A549 (cell line): ENCODE measurements at regions of chr2 and their contacts with region 1.

Region 1: GRCh38 chr2:101252408-101253012 is at the start of gene CNOT11:
- DNase-seq: peak; percentile 77 to 98
- ATAC-seq: peak; percentile 94 to 98
- H3K4me3 ChIP-seq: peak within 1 kb of the TSS; percentile 78
- H3K27ac ChIP-seq: peak within 1 kb of the TSS; percentile 91 to 97
- H3K4me1 ChIP-seq: peaks cover 29% of the 10 kb centered on the region
- CTCF ChIP-seq: no peak
- EP300 ChIP-seq: no peak
- POLR2A ChIP-seq: peak; percentile 96
- RAD21 ChIP-seq: 0 out of 5 replicates have a peak, but pooled peaks of 1 of the 2 experiments have one; percentile 3
- polyA plus RNA-seq, gene CNOT11: 76.7 and 99.1 TPM in 2 replicates

Region 2: GRCh38 chr2:101160454-101160853 is 92.1 kb before region 1 on chr2:
- CTCF ChIA-PET with region 1: no interaction called
- POLR2A ChIA-PET with region 1: no interaction called
- DNase-seq: peak in 1 of 2 experiments; percentile 56
- ATAC-seq: peak; percentile 59 to 77; a peak in 4 of 6 replicates
- H3K4me3 ChIP-seq: no peak overlapping the region
- H3K27ac ChIP-seq: peak overlapping the region in 1 of 2 experiments; percentile 59; a peak in 3 of 6 replicates
- H3K4me1 ChIP-seq: peaks cover 15% of the 10 kb centered on the region
- CTCF ChIP-seq: no peak
- EP300 ChIP-seq: no peak
- POLR2A ChIP-seq: no peak
- RAD21 ChIP-seq: no peak

Region 3: GRCh38 chr2:101238930-101239759 is 13.4 kb before region 1 on chr2:
- CTCF ChIA-PET with region 1: interaction called, 30 read pairs
- POLR2A ChIA-PET with region 1: interaction called, 8 read pairs
- DNase-seq: peak; percentile 68 to 90
- ATAC-seq: peak; percentile 85 to 90
- H3K4me3 ChIP-seq: peak overlapping the region; percentile 27
- H3K27ac ChIP-seq: peak overlapping the region; percentile 71 to 83
- H3K4me1 ChIP-seq: peaks cover 24% of the 10 kb centered on the region
- CTCF ChIP-seq: no peak
- EP300 ChIP-seq: no peak
- POLR2A ChIP-seq: no peak
- RAD21 ChIP-seq: no peak